Mammary epithelial cell (primary cell): ENCODE measurements at regions of chr16 and their contacts with region 1.

Region 1: DNA sequence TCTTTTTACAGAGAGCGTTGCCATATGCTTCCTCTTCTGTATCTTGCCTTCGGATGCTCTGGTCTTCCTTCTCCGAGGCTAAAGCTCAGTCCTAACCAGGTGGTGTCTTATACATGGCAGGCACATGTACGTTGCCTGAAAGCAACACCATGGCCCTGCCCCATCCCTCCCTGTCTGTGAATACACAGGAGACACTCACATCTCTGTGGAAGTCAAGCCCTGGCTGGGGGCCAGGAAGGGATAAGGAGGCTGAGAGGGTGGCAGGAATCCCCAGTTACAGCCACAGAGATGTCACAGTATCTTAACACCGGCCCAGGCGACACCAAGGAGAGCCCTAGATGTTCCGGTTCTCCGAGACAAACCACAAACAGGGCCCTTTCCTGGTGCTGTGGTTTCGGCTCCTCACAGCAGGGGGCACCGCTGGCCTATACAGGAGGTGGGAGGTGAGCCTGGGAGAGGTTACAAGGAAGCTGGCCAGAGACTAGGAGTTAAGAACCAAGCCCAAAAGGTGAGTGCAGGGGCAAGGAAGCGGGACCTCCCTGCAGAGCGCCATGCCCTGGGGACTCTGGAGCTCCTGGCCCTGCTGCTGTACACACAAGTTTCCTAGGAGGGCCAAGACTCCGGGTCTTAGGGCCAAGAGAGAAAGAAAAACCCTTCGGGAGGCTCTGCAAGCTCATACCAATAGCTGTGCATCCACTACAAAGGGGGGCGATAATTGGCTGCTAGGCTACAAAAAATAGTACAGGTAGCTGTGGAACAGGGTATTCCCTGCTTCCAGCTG is 41.7 kb downstream of the SRL start:
- DNase-seq: peak; percentile 51
- H3K4me3 ChIP-seq: no peak overlapping the region
- H3K27ac ChIP-seq: no peak overlapping the region
- H3K4me1 ChIP-seq: peaks cover 3% of the 10 kb centered on the region
- H3K27me3 ChIP-seq: no peaks in the 10 kb centered on the region
- CTCF ChIP-seq: peak; percentile 81 to 91

Region 2: GRCh38 chr16:3971261-3971660 is 228.9 kb before region 1 on chr16:
- CTCF ChIA-PET with region 1: no interaction called
- dilution Hi-C with region 1: loop called (anchors 10 kb)
- in situ Hi-C with region 1: no loop called
- intact Hi-C with region 1: no loop called
- DNase-seq: no peak
- H3K4me3 ChIP-seq: no peak overlapping the region
- H3K27ac ChIP-seq: no peak overlapping the region
- H3K4me1 ChIP-seq: no peaks in the 10 kb centered on the region
- H3K27me3 ChIP-seq: no peaks in the 10 kb centered on the region
- CTCF ChIP-seq: no peak

Region 3: GRCh38 chr16:3983081-3983520 is 217.1 kb before region 1 on chr16:
- CTCF ChIA-PET with region 1: interaction called, 3 read pairs
- dilution Hi-C with region 1: loop called (anchors 10 kb)
- in situ Hi-C with region 1: no loop called
- intact Hi-C with region 1: loop called (anchors 1 kb)
- DNase-seq: peak; percentile 58
- H3K4me3 ChIP-seq: no peak overlapping the region
- H3K27ac ChIP-seq: no peak overlapping the region
- H3K4me1 ChIP-seq: peaks cover 7% of the 10 kb centered on the region
- H3K27me3 ChIP-seq: no peaks in the 10 kb centered on the region
- CTCF ChIP-seq: peak; percentile 73 to 93

Region 4: GRCh38 chr16:3992297-3993051 is 207.7 kb before region 1 on chr16:
- CTCF ChIA-PET with region 1: interaction called, 29 read pairs
- dilution Hi-C with region 1: no loop called
- in situ Hi-C with region 1: no loop called
- intact Hi-C with region 1: no loop called
- DNase-seq: no peak
- H3K4me3 ChIP-seq: no peak overlapping the region
- H3K27ac ChIP-seq: no peak overlapping the region
- H3K4me1 ChIP-seq: no peaks in the 10 kb centered on the region
- H3K27me3 ChIP-seq: no peaks in the 10 kb centered on the region
- CTCF ChIP-seq: no peak

Region 5: DNA sequence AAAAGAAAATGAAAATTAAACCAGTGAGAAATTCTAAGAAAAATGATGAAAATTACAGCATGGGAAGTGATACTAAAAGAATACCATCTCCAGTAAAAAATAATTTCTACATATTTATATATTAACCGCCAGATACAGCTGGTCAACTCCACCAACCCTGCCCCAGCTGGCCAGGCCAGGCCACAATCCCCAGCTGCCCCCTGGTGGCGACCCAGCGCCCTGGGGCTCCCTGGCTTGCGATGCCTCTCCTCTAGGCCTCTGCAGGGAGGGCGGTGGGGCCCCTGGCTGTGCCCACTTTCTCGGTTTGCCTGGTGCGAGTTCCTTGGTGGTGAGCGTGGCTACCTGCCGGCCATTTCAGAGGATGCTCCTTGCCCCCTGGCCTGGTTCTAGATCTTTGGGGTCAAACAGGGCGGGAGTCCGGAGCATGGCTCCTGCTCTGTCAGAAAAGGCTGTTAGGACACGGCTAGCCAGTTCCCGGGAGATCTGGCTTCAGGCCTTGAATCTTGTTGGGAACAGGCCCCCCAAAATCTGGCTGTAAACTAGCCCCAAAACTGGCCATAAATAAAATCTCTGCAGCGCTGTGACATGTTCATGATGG is 130.2 kb after region 1 on chr16:
- CTCF ChIA-PET with region 1: no interaction called
- dilution Hi-C with region 1: no loop called
- in situ Hi-C with region 1: loop called in 1 of 2 experiments (anchors 10 kb)
- intact Hi-C with region 1: loop called (anchors 1 kb)
- DNase-seq: peak; percentile 32
- H3K4me3 ChIP-seq: no peak overlapping the region
- H3K27ac ChIP-seq: no peak overlapping the region
- H3K4me1 ChIP-seq: peaks cover 10% of the 10 kb centered on the region
- H3K27me3 ChIP-seq: no peaks in the 10 kb centered on the region
- CTCF ChIP-seq: peak; percentile 79 to 95

Region 6: DNA sequence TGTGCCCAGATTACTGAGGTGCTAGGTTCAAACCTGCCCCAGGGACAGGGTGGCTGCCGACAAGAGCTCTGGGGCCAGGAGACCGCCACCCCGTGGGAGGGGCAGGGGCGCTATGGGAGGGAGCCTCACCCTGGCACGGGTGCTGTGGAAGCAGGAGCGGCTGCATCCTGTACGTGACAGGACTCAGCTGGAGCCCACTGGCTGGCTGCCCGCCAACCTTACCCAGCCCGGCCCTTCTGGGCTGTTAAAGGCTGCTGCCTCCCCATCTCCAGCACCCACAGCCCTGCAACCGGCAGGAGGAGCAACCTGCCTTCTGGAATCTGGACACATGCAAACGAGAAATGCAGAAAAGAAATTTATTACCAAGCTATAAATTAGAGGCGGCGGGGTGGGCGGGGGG is 139.7 kb after region 1 on chr16:
- CTCF ChIA-PET with region 1: no interaction called
- dilution Hi-C with region 1: loop called (anchors 10 kb)
- in situ Hi-C with region 1: loop called in 1 of 2 experiments (anchors 10 kb)
- intact Hi-C with region 1: no loop called
- DNase-seq: no peak
- H3K4me3 ChIP-seq: no peak overlapping the region
- H3K27ac ChIP-seq: no peak overlapping the region
- H3K4me1 ChIP-seq: no peaks in the 10 kb centered on the region
- H3K27me3 ChIP-seq: no peaks in the 10 kb centered on the region
- CTCF ChIP-seq: no peak

Region 7: DNA sequence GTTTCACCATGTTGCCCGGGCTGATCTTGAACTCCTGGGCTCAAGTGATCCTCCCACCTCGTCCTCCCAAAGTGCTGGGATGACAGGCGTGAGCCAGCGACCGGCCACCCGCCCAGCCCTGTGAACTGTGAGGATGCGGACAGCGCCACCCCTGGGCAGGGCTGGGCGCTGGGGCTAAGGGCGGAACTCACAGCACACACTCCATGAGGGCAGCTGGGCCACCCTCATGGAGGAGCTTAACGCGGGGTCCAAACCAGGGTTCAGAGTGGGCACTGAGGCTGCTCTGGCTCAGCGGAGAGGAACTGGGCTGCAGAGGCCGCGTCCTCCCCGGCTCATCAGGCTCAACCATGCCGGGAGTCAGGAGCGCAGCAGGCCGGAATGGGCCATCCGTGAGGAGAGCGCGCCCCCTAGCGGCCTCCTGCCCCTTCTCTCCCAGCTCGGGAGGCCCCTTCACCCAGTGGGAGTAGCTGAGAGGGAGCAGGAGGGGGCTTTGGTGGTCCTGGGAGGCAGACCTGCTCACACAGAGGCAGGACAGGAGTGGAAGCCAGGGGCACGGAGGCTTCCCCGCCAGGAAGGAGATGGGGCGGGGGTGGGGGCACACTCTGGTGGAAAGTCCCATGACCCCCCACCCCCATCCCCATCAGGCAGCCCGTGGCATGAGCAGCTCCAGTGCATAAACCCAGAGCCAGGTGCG is 202.4 kb after region 1 on chr16:
- CTCF ChIA-PET with region 1: no interaction called
- dilution Hi-C with region 1: no loop called
- in situ Hi-C with region 1: loop called in 1 of 2 experiments (anchors 10 kb)
- intact Hi-C with region 1: loop called (anchors 1 kb)
- DNase-seq: peak; percentile 53
- H3K4me3 ChIP-seq: peak overlapping the region in 1 of 3 experiments; percentile 22
- H3K27ac ChIP-seq: no peak overlapping the region
- H3K4me1 ChIP-seq: peaks cover 4% of the 10 kb centered on the region
- H3K27me3 ChIP-seq: no peaks in the 10 kb centered on the region
- CTCF ChIP-seq: peak; percentile 57 to 88